ENCODE measurements at regions of chr11 and their contacts with region 1.

Region 1: GRCh38 chr11:29634248-29634647 is 382.6 kb downstream of the KCNA4 start:
- DNase-seq: no peak
- ATAC-seq: no peak
- H3K4me3 ChIP-seq: no peak overlapping the region
- H3K27ac ChIP-seq: no peak overlapping the region
- H3K4me1 ChIP-seq: no peaks in the 10 kb centered on the region
- H3K27me3 ChIP-seq: no peaks in the 10 kb centered on the region
- CTCF ChIP-seq: peak in 6 of 9 donors; percentile 23 to 38 (median 34)

Region 2: GRCh38 chr11:29438815-29439214 is 195.4 kb before region 1 on chr11:
- intact Hi-C with region 1: no loop called
- DNase-seq: no peak
- ATAC-seq: no peak
- H3K4me3 ChIP-seq: no peak overlapping the region
- H3K27ac ChIP-seq: no peak overlapping the region
- H3K4me1 ChIP-seq: no peaks in the 10 kb centered on the region
- H3K27me3 ChIP-seq: no peaks in the 10 kb centered on the region
- CTCF ChIP-seq: no peak

Region 3: GRCh38 chr11:29534836-29535235 is 99.4 kb before region 1 on chr11:
- intact Hi-C with region 1: loop called in 1 of 10 experiments (anchors 10 kb)
- DNase-seq: no peak
- ATAC-seq: no peak
- H3K4me3 ChIP-seq: no peak overlapping the region
- H3K27ac ChIP-seq: no peak overlapping the region
- H3K4me1 ChIP-seq: peaks cover 0 to 13% (median 6%) of the 10 kb centered on the region in 9 donors
- H3K27me3 ChIP-seq: no peaks in the 10 kb centered on the region
- CTCF ChIP-seq: no peak

Measured in heart right ventricle (tissue), 16 donors.